Mammary epithelial cell (primary cell): ENCODE measurements at regions of chr20 and their contacts with region 1.

Region 1: DNA sequence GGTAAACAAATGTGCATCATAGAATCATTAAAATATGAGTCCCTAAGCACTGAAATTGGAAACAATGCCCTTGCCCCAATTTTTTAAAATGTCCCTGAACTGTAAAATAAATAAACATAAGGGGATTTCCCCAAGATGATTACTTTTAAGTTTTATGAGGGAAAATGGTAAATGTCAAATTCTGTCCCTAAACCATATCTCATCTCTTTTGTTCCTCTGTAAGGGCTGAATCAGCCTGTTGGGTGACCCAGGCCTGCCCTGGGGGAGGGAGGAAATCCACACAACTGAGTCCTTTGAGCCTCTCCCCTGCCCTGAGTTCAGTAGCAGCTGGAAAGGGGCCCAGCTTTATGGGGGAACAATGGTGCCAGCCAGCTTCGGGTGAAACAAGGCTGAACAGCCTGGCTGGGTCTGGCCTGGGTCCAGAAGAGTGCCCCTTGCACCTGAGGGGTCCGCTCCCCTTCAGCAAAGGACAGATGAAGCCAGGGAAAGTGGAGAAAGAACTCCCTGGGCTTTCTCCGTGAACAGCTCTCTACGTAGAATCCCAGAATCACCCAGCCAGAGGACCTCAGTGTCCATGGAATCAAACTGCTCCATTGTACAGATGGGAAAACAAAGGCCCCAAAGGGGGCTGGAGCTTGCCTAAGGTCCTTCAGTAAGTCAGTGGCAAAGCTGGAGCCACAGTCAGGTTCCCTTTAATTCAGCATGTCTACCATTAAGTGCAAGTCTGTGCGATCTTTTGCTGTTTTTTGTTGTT is 28.2 kb upstream of the ITCH start:
- DNase-seq: peak; percentile 66
- H3K4me3 ChIP-seq: no peak overlapping the region
- H3K27ac ChIP-seq: peak overlapping the region; percentile 93
- H3K4me1 ChIP-seq: peaks cover 27% of the 10 kb centered on the region
- H3K27me3 ChIP-seq: no peaks in the 10 kb centered on the region
- CTCF ChIP-seq: no peak

Region 2: DNA sequence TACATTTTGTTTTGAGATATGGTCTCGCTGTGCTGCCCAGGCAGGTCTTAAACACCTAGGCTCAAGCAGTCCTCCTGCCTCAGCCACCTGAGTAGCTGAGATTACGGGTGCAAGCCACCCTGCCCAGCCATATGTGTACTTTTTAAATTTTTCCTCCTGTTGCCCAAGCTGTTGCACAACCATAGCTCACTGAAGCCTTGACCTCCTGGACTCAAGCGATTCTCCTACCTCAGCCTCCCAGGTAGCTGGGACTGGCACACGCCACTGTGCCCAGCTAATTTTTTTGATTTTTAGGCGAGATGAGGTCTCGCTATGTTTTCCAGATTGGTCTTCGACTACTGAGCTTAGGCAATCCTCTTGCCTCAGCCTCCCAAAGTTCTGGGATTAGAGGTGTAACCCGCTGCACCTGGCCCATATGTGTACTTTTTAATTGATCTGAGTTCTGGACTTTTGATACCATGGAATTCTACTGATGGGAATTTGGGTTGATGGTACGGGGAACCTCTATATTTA is 73.2 kb after region 1 on chr20:
- CTCF ChIA-PET with region 1: no interaction called
- dilution Hi-C with region 1: loop called (anchors 5 kb)
- in situ Hi-C with region 1: no loop called
- intact Hi-C with region 1: no loop called
- DNase-seq: no peak
- H3K4me3 ChIP-seq: no peak overlapping the region
- H3K27ac ChIP-seq: no peak overlapping the region
- H3K4me1 ChIP-seq: peaks cover 4% of the 10 kb centered on the region
- H3K27me3 ChIP-seq: no peaks in the 10 kb centered on the region
- CTCF ChIP-seq: no peak